ENCODE measurements at regions of chr16 and their contacts with region 1.

Region 1: GRCh38 chr16:78900044-78900811 is 700.3 kb downstream of the MAF start:
- DNase-seq: no peak
- H3K4me3 Mint-ChIP-seq: no peak overlapping the region
- H3K27ac Mint-ChIP-seq: peak overlapping the region; percentile 51
- H3K4me1 Mint-ChIP-seq: peaks cover 42% of the 10 kb centered on the region
- H3K27me3 Mint-ChIP-seq: no peaks in the 10 kb centered on the region

Region 2: DNA sequence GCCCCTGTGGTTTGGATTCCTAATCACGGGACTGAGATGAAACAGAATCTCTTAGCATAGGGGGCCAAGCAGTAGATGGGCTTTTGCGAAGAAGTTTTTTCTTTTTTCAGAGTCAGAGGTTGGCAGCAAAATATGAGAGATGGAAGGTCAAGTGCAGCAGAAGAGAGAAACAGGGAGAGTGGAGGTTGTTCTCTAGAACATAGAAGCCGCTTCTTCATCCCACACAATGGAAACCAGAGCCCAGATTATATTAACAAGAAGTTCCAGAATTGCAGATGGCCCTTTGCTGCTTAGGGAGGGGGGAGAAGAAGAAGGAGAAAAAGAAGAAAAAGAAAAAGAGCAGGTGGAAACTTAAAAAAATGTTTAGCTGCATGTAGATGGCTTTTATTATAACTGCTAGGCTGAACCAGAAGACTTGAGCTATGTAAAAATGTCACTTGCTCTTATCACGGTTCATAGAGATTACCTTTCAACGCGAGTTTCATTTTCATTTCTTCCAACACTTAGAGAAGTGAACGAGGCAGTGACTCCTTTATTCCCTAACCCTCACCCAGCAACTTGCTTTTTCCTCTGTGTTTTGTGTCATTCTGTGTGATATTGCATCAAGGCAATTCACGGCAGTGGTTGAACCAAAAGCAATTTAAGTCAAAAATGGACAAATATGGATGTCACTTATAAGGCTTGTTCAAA is 63.3 kb before region 1 on chr16:
- intact Hi-C with region 1: loop called (anchors 2 kb)
- DNase-seq: no peak
- H3K4me3 Mint-ChIP-seq: peak overlapping the region; percentile 25
- H3K27ac Mint-ChIP-seq: peak overlapping the region; percentile 86
- H3K4me1 Mint-ChIP-seq: peaks cover 11% of the 10 kb centered on the region
- H3K27me3 Mint-ChIP-seq: peaks cover 3% of the 10 kb centered on the region

Region 3: DNA sequence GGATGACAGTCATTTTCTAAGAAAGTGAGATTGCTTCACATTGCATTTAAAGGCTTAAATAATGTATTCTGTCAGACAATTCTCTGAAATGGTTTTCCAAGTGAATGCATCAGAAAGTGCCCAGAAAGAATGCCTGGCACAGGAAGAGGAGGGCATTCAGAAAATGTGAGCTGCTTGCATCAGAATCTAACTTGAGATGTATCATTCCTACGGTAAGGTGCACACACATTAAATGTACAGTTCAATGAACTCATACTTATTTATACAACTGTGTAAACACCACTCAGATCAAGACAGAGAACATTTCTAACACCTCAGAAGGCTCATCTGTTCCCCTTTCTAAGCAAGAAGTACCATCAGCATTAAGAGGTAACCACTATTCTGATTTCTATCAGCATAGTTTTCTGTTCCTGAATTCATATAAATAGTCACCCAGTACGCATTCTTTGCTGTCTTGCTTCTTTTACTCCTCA is 62.3 kb after region 1 on chr16:
- intact Hi-C with region 1: loop called (anchors 2 kb)
- DNase-seq: no peak
- H3K4me3 Mint-ChIP-seq: no peak overlapping the region
- H3K27ac Mint-ChIP-seq: peak overlapping the region; percentile 53
- H3K4me1 Mint-ChIP-seq: peaks cover 9% of the 10 kb centered on the region
- H3K27me3 Mint-ChIP-seq: peaks cover 2% of the 10 kb centered on the region

Region 4: DNA sequence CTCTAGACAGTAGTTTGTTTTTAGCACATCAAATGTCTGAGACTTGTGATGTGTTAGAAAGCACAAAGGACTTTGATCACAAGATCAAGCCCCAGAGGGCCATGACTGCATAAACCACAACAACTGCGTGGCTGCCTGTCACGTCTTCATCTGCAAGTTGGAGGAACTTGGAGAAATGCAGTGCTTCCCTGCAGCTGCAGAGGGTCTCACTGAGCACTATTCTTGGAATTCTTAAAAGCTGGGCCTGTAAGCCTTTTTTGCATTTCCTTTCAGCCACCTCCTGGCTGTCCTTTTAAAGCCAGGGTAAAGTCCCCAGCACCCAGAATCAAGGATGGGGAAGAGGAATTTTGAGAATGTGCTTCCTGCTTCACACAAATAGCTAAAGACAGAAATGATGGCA is 269.0 kb after region 1 on chr16:
- intact Hi-C with region 1: loop called (anchors 10 kb)
- DNase-seq: peak; percentile 11
- H3K4me3 Mint-ChIP-seq: no peak overlapping the region
- H3K27ac Mint-ChIP-seq: no peak overlapping the region
- H3K4me1 Mint-ChIP-seq: peaks cover 14% of the 10 kb centered on the region
- H3K27me3 Mint-ChIP-seq: no peaks in the 10 kb centered on the region

Measured in activated T-helper 1 cell treated with anti-CD3 and anti-CD28 coated beads, Interleukin-12 subunit alpha, Interleukin-12 subunit beta, Interleukin-2, Interleukin-4 antibody, amounts not matched to agents 30 ng/mL and 10 ng/mL and 1 ng/mL, durations not matched to agents 14 hours and 24 hours and 36 hours (primary cell).